Right ventricle myocardium superior (tissue), 1 donor: ENCODE measurements at regions of chr6 and their contacts with region 1.

Region 1: GRCh38 chr6:168895102-168895812 is 358.4 kb downstream of the THBS2 start:
- DNase-seq: peak; percentile 86
- ATAC-seq: peak; percentile 97

Region 2: GRCh38 chr6:169115632-169116031 is 220.4 kb after region 1 on chr6:
- intact Hi-C with region 1: no loop called
- DNase-seq: no peak
- ATAC-seq: peak; percentile 46

Region 3: GRCh38 chr6:169529931-169530751 is 634.9 kb after region 1 on chr6:
- intact Hi-C with region 1: loop called (anchors 10 kb)
- DNase-seq: no peak
- ATAC-seq: peak; percentile 73